HCT116 (cell line): ENCODE measurements at regions of chr16 and their contacts with region 1.

Region 1: GRCh38 chr16:48559462-48560211 is 50.3 kb downstream of the N4BP1 start:
- DNase-seq: no peak
- ATAC-seq: peak; percentile 49; the same call in 1 of the 2 replicates
- H3K4me3 ChIP-seq: no peak overlapping the region
- H3K27ac ChIP-seq: no peak overlapping the region
- H3K4me1 ChIP-seq: peaks cover 0 to 16% of the 10 kb centered on the region in 2 experiments; a peak in 2 of 4 replicates
- H3K27me3 ChIP-seq: no peaks in the 10 kb centered on the region
- CTCF ChIP-seq: no peak
- POLR2A ChIP-seq: no peak
- RAD21 ChIP-seq: no peak

Region 2: DNA sequence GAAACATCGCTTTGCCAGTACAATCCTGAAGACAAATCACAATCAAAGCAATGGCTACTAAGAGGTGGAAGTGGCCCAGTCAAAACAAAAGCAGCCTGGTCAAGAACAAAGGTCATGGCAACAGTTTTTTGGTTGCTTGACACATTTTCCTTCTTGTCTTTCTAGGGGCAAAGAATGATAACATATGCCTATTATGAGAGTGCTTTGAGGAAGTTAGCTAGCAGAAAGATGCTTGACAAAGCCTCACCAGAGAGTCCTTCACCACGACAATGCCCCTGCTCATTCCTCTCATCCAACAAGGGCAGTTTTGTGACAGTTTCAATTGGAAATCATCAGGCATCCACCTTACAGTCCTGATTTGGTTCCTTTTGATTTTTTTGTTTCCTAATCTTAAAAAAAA is 82.1 kb after region 1 on chr16:
- CTCF ChIA-PET with region 1: no interaction called
- POLR2A ChIA-PET with region 1: no interaction called
- RAD21 ChIA-PET with region 1: no interaction called
- intact Hi-C with region 1: loop called (anchors 10 kb)
- DNase-seq: no peak
- ATAC-seq: no peak
- H3K4me3 ChIP-seq: no peak overlapping the region
- H3K27ac ChIP-seq: no peak overlapping the region
- H3K4me1 ChIP-seq: no peaks in the 10 kb centered on the region
- H3K27me3 ChIP-seq: no peaks in the 10 kb centered on the region
- CTCF ChIP-seq: no peak
- POLR2A ChIP-seq: no peak
- RAD21 ChIP-seq: no peak